Posterior vena cava (tissue), 2 donors: ENCODE measurements at regions of chr2 and their contacts with region 1.

Region 1: DNA sequence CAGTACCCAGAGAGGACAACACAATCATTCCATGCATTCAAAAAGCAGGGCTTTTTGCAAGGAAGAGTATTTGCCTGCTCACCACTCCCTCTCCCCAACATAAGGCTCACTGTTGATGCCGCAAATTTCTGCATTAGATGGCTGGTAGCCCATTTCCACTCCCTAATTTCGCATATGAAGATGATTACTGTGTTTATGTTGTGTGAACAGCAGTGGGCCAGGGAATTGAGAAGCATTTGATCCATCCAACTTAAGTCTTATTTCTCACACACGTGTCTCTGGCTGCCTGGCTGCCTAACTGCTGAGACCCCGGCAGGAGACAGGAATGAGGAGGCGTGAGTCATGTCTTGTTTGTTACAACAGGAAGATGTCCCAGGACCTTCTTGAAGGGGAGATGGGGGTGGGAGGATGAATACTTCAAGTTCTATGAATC is 294.1 kb downstream of the ALK start:
- DNase-seq: no peak

Region 2: GRCh38 chr2:31397094-31397493 is 1769.8 kb after region 1 on chr2:
- intact Hi-C with region 1: loop called in 1 of 2 experiments (anchors 5 kb)
- DNase-seq: no peak